ENCODE measurements at regions of chr11 and their contacts with region 1.

Region 1: GRCh38 chr11:67317205-67317887 is 14.0 kb downstream of the SSH3 start:
- DNase-seq: peak; percentile 96 to 99 (median 98)
- ATAC-seq: peak; percentile 88
- H3K4me3 ChIP-seq: peak overlapping the region; percentile 57
- H3K27ac ChIP-seq: peak overlapping the region; percentile 80
- H3K4me1 ChIP-seq: peaks cover 36 to 39% of the 10 kb centered on the region in 2 experiments
- H3K27me3 ChIP-seq: no peaks in the 10 kb centered on the region
- CTCF ChIP-seq: peak; percentile 95 to 99 (median 96)
- EP300 ChIP-seq: no peak; the same call in 1 of the 2 replicates
- POLR2A ChIP-seq: peak; percentile 87
- RAD21 ChIP-seq: peak; percentile 99 to 100

Region 2: GRCh38 chr11:67082035-67082791 is 235.1 kb before region 1 on chr11:
- CTCF ChIA-PET with region 1: interaction called, 12 read pairs
- POLR2A ChIA-PET with region 1: interaction called, 6 read pairs
- in situ Hi-C with region 1: loop called (anchors 5 kb)
- intact Hi-C with region 1: loop called (anchors 1 kb)
- DNase-seq: peak; percentile 44 to 75 (median 64)
- ATAC-seq: peak; percentile 49
- H3K4me3 ChIP-seq: no peak overlapping the region
- H3K27ac ChIP-seq: no peak overlapping the region
- H3K4me1 ChIP-seq: peaks cover 20 to 25% of the 10 kb centered on the region in 2 experiments; a peak in 4 of 5 replicates
- H3K27me3 ChIP-seq: no peaks in the 10 kb centered on the region
- CTCF ChIP-seq: peak in 2 of 3 experiments; percentile 29 to 47; a peak in 4 of 6 replicates
- EP300 ChIP-seq: no peak
- POLR2A ChIP-seq: no peak
- RAD21 ChIP-seq: peak in 1 of 2 experiments; percentile 55; a peak in 2 of 4 replicates

Region 3: GRCh38 chr11:67230406-67230805 is 86.9 kb before region 1 on chr11:
- CTCF ChIA-PET with region 1: no interaction called
- POLR2A ChIA-PET with region 1: no interaction called
- in situ Hi-C with region 1: no loop called
- intact Hi-C with region 1: no loop called
- DNase-seq: no peak
- ATAC-seq: no peak
- H3K4me3 ChIP-seq: no peak overlapping the region
- H3K27ac ChIP-seq: no peak overlapping the region
- H3K4me1 ChIP-seq: no peaks in the 10 kb centered on the region
- H3K27me3 ChIP-seq: no peaks in the 10 kb centered on the region
- CTCF ChIP-seq: no peak
- EP300 ChIP-seq: no peak
- POLR2A ChIP-seq: no peak
- RAD21 ChIP-seq: no peak

Region 4: DNA sequence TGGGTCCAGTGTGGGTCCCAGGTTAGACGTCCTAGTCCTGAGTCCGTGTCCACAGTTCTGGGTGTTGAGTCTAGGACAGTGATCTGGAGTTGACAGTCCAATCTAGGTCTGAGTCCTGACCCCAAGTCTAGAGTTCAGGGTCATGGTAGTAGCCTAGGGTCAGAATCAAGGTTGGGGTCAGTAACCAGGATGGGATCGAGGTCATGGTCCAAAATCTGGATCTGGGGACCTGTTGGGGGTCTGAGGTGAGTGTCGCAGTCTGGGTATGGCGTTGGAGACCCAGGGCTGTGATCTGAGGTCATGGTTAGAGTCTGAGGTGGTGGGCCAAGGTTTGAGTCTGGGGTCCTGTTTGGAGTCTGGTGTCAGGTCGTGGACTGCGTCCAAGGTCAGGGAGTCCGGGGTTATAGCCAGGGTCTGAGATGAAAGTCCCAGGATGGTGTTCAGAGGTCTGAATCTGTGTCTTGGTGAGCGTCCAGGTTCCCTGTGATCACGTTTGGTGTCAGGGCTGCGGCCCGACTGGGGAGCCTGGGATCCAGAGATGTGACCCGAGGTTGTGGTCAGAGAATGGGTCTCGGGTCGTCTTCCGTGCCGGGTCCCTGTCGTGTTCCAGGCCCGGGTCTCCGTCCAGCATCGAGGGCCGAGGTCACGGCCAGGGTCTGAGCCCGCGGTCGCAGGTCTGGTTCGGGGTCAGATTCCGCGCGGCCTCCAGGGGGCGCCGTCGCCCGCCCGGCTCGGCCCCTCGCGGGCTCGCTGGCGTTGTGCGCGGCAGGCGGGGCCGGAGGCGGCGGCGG is 51.5 kb before region 1 on chr11:
- CTCF ChIA-PET with region 1: interaction called, 35 read pairs
- POLR2A ChIA-PET with region 1: interaction called, 8 read pairs
- in situ Hi-C with region 1: no loop called
- intact Hi-C with region 1: loop called (anchors 1 kb)
- DNase-seq: peak in 2 of 4 experiments; percentile 84 to 91
- ATAC-seq: peak; percentile 84
- H3K4me3 ChIP-seq: no peak overlapping the region
- H3K27ac ChIP-seq: peak overlapping the region; percentile 61; the same call in 2 of the 3 replicates
- H3K4me1 ChIP-seq: peaks cover 49 to 71% of the 10 kb centered on the region in 2 experiments
- H3K27me3 ChIP-seq: no peaks in the 10 kb centered on the region
- CTCF ChIP-seq: peak; percentile 69 to 88 (median 82)
- EP300 ChIP-seq: no peak
- POLR2A ChIP-seq: no peak
- RAD21 ChIP-seq: peak; percentile 71 to 79

Region 5: GRCh38 chr11:67277231-67277961 is 40.0 kb before region 1 on chr11:
- CTCF ChIA-PET with region 1: interaction called, 6 read pairs
- POLR2A ChIA-PET with region 1: interaction called, 5 read pairs
- in situ Hi-C with region 1: loop called (anchors 5 kb)
- intact Hi-C with region 1: loop called (anchors 1 kb)
- DNase-seq: peak; percentile 83 to 94 (median 86)
- ATAC-seq: peak; percentile 95
- H3K4me3 ChIP-seq: peak overlapping the region; percentile 37
- H3K27ac ChIP-seq: peak overlapping the region; percentile 95
- H3K4me1 ChIP-seq: peaks cover 27 to 86% of the 10 kb centered on the region in 2 experiments
- H3K27me3 ChIP-seq: no peaks in the 10 kb centered on the region
- CTCF ChIP-seq: no peak
- EP300 ChIP-seq: peak; percentile 77
- POLR2A ChIP-seq: peak; percentile 81
- RAD21 ChIP-seq: peak in 1 of 2 experiments; percentile 5; a peak in 1 of 4 replicates

Region 6: GRCh38 chr11:67288452-67289225 is 28.7 kb before region 1 on chr11:
- CTCF ChIA-PET with region 1: interaction called, 9 read pairs
- POLR2A ChIA-PET with region 1: interaction called, 5 read pairs
- in situ Hi-C with region 1: no loop called
- intact Hi-C with region 1: loop called (anchors 2 kb)
- DNase-seq: peak; percentile 90 to 94 (median 92)
- ATAC-seq: peak; percentile 86
- H3K4me3 ChIP-seq: peak overlapping the region; percentile 71
- H3K27ac ChIP-seq: peak overlapping the region; percentile 93
- H3K4me1 ChIP-seq: peaks cover 15 to 56% of the 10 kb centered on the region in 2 experiments
- H3K27me3 ChIP-seq: no peaks in the 10 kb centered on the region
- CTCF ChIP-seq: peak in 2 of 3 experiments; percentile 50 to 65; a peak in 4 of 6 replicates
- EP300 ChIP-seq: peak; percentile 73
- POLR2A ChIP-seq: peak; percentile 91
- RAD21 ChIP-seq: peak; percentile 60 to 65

Region 7: GRCh38 chr11:67303132-67303834 is 14.1 kb before region 1 on chr11 and contains the start of gene SSH3:
- CTCF ChIA-PET with region 1: no interaction called
- POLR2A ChIA-PET with region 1: interaction called, 10 read pairs
- in situ Hi-C with region 1: no loop called
- intact Hi-C with region 1: no loop called
- DNase-seq: peak in 1 of 4 experiments; percentile 8
- ATAC-seq: peak; percentile 10; the same call in 2 of the 3 replicates
- H3K4me3 ChIP-seq: no peak within 1 kb of the TSS
- H3K27ac ChIP-seq: no peak within 1 kb of the TSS
- H3K4me1 ChIP-seq: peaks cover 0 to 43% of the 10 kb centered on the region in 2 experiments; a peak in 2 of 5 replicates
- H3K27me3 ChIP-seq: no peaks in the 10 kb centered on the region
- CTCF ChIP-seq: no peak
- EP300 ChIP-seq: no peak
- POLR2A ChIP-seq: no peak
- RAD21 ChIP-seq: no peak
- polyA plus RNA-seq, gene SSH3: not detected

Region 8: DNA sequence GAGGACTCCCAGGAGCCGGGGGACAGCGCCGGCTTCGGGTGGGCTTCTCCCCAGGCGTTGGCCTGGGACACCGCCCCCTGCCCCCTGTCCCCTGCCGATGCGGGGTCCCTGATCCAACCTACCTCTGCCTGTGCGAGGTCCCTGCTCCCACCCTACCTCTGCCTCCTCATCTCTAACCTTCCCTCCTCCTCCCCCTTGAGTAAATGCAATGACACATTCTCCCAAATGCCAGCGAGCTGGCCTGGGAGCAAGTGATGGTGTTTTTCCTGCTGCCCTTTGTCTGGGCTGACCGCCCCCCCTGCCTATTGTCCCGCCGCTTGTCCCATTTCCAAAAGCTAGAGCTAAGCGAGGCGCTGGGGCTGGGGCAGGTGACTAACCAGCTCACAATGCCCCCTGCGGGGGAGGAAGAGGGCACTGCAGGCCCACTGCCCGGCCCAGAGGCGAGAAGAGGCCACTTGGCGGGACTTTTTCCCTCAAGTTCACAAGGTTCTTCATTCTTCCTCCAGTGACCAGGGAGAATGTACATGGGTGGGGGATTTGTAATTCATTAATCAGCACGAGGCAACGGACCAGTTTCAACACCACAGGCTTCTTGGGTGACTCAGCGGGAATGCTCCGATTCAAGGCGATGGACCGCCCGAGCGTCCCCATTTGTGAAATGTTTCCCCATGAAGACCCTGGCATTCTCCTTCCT is 56.7 kb after region 1 on chr11:
- CTCF ChIA-PET with region 1: interaction called, 4 read pairs
- POLR2A ChIA-PET with region 1: interaction called, 10 read pairs
- in situ Hi-C with region 1: no loop called
- intact Hi-C with region 1: no loop called
- DNase-seq: peak; percentile 66 to 84 (median 70)
- ATAC-seq: peak; percentile 46
- H3K4me3 ChIP-seq: peak overlapping the region; percentile 96
- H3K27ac ChIP-seq: peak overlapping the region; percentile 95
- H3K4me1 ChIP-seq: peaks cover 59 to 81% of the 10 kb centered on the region in 2 experiments
- H3K27me3 ChIP-seq: no peaks in the 10 kb centered on the region
- CTCF ChIP-seq: peak; percentile 61 to 74 (median 67)
- EP300 ChIP-seq: no peak; the same call in 1 of the 2 replicates
- POLR2A ChIP-seq: peak; percentile 70
- RAD21 ChIP-seq: peak; percentile 30 to 58